ENCODE measurements at regions of chr15 and their contacts with region 1.

Region 1: DNA sequence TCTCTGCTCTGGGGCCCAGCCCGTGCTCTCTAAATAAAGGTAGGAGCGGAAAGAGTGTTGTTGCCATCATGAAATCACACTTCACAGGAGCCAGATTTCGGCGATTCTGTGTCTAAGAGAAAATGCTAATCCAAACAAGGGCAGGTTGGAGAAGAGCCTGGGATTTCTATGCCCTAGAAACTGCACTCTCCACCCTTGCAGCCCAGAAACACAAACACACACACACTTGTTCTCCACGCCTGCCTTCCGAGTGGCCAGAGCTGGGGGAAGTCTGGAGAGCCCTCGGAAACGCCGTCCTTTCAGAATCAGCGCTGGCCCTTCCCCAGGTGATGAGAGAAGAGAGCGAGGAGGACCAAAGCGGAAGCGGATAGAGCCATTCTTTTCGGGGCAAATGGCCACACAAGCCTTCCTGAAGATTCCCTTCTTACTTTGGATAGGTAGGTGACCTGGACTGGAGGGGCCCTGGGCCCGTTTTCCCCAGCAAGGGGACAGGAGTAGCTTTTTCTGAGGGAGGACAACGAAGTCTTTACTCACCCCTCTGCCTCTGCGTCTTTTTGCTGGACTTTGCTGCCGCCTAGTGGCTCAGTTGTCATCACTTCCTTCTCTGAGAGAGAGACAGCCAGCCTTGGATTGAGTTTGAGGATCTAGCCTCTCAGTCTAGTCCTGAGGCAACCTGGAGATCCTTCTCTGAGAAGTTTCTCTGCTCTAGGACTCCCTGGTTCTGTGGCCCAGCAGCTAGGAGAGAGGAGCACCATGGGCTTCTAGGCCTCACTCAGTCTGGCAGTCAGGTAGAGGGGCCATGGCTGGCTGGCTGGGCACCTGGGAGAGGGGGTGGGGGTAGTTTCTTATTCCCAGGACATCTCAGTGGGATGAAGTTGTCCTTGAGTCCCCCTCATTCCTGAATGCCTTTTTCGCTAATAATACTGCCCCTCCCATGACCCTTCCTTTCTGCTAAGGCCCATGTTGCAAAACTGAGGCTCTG is 37.7 kb downstream of the SENP8 start:
- DNase-seq: peak; percentile 91
- ATAC-seq: peak; percentile 94
- H3K4me3 Mint-ChIP-seq: peak overlapping the region; percentile 27
- H3K27ac Mint-ChIP-seq: no peak overlapping the region
- H3K4me1 Mint-ChIP-seq: peaks cover 9% of the 10 kb centered on the region
- H3K27me3 Mint-ChIP-seq: no peaks in the 10 kb centered on the region; the same call in 1 of the 2 replicates
- CTCF ChIP-seq: peak; percentile 84

Region 2: GRCh38 chr15:71780115-71780976 is 375.6 kb before region 1 on chr15:
- CTCF ChIA-PET with region 1: interaction called, 13 read pairs
- POLR2A ChIA-PET with region 1: no interaction called
- DNase-seq: peak; percentile 81
- ATAC-seq: peak; percentile 95
- H3K4me3 Mint-ChIP-seq: no peak overlapping the region
- H3K27ac Mint-ChIP-seq: peak overlapping the region; percentile 63
- H3K4me1 Mint-ChIP-seq: peaks cover 9% of the 10 kb centered on the region
- H3K27me3 Mint-ChIP-seq: no peaks in the 10 kb centered on the region
- CTCF ChIP-seq: peak; percentile 75

Region 3: GRCh38 chr15:71806452-71806931 is 349.4 kb before region 1 on chr15:
- CTCF ChIA-PET with region 1: interaction called, 30 read pairs
- POLR2A ChIA-PET with region 1: no interaction called
- DNase-seq: no peak
- ATAC-seq: no peak
- H3K4me3 Mint-ChIP-seq: peak overlapping the region; percentile 60
- H3K27ac Mint-ChIP-seq: peak overlapping the region; percentile 87; the same call in 1 of the 2 replicates
- H3K4me1 Mint-ChIP-seq: peaks cover 48% of the 10 kb centered on the region
- H3K27me3 Mint-ChIP-seq: no peaks in the 10 kb centered on the region; the same call in 1 of the 2 replicates
- CTCF ChIP-seq: no peak

Measured in WTC11 (cell line).